HEK293T (cell line): ENCODE measurements at regions of chr4 and their contacts with region 1.

Region 1: DNA sequence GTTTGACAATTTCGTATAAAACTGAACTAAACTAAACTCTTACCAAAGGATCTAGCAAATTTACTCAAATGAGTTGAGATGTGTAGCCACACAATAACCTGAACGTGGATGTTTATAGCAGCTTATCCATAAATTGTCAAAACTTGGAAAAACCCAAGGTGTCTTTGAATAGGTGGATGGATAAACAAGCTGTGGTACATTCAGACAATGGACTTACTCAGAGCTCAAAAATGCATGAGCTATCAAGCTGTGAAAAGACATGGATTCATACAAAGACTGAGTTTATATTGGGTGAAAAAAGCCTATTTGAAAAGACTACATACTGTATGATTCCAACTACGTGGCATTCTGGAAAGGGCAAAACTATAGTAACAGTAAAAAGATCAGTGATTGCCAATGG is 69.5 kb downstream of the LARP1B start:
- DNase-seq: no peak

Region 2: GRCh38 chr4:127809173-127809800 is 321.3 kb before region 1 on chr4:
- CTCF ChIA-PET with region 1: interaction called, 13 read pairs
- POLR2A ChIA-PET with region 1: no interaction called
- DNase-seq: no peak

Region 3: DNA sequence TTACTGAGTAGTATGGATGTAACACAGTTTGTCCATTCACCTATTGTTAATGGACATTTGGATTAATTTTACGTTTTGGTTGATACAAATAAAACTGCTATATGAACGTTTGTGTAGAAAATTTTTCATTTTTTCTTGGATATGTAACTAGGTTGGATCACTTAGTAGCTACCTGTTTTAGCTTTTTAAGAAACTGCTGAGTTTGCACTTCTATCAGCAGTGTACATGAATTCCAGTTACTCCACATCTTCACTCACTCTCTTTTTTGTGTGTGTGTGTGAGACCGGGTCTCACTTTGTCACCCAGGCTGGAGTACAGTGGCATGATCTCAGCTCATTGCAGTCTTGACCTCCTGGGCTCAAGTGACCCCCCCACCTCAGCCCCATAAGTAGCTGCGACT is 54.2 kb before region 1 on chr4:
- CTCF ChIA-PET with region 1: no interaction called
- POLR2A ChIA-PET with region 1: no interaction called
- DNase-seq: no peak

Region 4: GRCh38 chr4:128141866-128142265 is 11.2 kb after region 1 on chr4:
- CTCF ChIA-PET with region 1: no interaction called
- POLR2A ChIA-PET with region 1: no interaction called
- DNase-seq: no peak